ENCODE measurements at regions of chr1 and their contacts with region 1.

Region 1: DNA sequence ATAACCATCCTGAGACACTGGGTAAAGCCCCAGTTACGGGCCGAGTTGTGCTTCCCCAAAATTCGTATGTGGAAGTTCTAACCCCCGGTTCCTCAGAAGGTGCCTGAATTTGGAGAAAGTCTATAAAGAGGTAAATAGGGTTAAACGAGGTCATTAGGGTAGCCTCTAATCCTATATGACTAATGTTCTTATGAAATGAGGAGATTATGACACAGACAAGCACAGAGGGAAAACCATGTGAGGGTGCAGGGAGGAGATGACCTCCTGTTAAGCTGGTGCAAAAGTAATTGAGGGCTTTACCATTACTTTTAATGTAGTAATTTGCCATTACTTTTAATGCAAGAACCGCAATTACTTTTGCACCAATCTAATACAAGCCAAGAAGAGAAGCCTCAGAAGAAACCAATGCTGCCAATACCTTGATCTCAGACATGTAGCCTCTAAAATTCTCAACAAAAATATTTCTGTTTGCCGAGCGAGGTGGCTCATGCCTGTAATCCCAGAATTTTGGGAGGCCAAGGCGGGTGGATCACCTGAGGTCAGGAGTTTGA is 260.8 kb downstream of the GPATCH2 start:
- DNase-seq: no peak
- H3K4me3 ChIP-seq: no peak overlapping the region
- CTCF ChIP-seq: no peak
- POLR2A ChIP-seq: no peak

Region 2: DNA sequence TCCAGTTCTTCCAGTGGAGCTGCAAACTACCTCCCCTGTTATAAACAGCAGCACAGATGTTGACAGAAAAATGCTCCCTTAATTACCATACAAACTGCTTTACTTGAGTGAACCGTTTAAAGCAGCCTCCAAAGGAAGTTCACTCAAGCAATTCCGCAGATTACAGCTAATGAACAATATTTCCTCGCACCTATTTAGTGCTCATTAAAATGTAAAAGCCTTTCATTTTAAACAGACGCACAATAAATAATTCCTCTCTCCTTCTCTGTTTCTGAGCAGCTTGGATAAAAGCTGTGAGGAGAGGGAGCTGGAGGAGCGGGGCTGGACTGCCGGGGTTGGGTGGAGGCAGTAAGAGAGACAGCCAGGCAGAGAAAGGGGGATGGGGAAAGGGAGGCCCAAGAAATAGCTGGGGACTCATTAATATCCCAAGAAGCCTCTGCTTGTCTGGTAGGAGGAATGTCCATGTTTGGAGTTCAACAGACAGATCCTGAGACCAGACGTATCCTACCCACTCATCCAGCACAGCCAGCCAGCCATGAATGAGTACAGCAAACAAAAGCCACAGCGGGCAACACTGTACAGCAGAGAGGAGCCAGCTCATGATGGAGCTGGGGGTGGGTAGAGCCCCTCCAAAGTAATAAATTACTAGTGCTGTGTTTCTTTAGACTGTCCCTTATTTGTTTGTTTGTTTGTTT is 33.1 kb after region 1 on chr1:
- intact Hi-C with region 1: loop called (anchors 2 kb)
- DNase-seq: no peak
- H3K4me3 ChIP-seq: no peak overlapping the region
- CTCF ChIP-seq: no peak
- POLR2A ChIP-seq: no peak

Measured in lower leg skin (tissue), 4 donors.